MCF 10A (cell line): ENCODE measurements at regions of chr12 and their contacts with region 1.

Region 1: DNA sequence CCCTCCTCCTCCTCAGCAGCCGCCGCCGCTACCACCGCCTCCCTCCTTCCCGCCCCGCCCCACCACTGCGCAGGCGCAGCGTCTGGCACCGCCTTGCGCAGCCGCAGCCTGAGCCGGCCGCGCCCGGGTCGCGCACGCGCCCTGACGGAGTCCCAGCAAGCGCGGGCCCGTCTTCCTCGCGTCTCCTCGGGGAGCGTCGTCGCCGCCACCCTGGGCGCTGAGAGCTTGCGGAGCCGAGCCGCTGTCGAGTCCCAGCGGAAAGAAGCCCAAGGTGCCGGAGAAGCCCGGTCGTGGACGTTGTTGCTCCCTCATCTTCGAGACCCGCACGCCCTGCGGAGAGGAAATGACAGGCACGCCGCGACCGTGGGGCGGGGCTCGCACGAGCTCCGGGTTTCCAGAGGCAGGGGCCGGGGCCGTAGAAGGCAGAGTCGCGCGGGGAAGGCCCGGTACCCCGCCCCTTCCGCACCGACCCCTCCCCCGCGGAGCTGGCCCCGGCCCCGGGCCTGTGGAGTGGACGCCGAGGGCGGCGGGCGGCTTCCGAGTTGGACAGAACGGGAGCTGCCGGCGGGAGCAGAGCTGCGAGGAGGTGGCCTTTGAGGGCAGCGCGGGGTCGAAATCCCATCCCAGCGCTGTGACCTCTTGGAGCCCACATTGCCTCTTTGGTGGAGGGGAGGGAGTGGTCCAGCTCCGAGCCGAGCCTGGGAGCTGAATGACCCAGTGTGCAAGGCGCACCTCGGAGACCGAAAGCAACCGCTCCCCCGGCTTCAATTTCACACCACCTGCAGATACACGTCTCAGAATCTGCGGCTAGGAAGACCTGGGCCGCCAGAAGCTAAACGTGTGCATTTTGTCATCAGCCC is 469 bp upstream of the RAB35 start:
- DNase-seq: peak; percentile 92
- H3K4me3 Mint-ChIP-seq: peak overlapping the region; percentile 83
- H3K27ac Mint-ChIP-seq: peak overlapping the region; percentile 95
- H3K4me1 Mint-ChIP-seq: peaks cover 44% of the 10 kb centered on the region
- H3K27me3 Mint-ChIP-seq: no peaks in the 10 kb centered on the region
- CTCF ChIP-seq: no peak

Region 2: GRCh38 chr12:119949145-119949544 is 167.9 kb before region 1 on chr12:
- CTCF ChIA-PET with region 1: no interaction called
- POLR2A ChIA-PET with region 1: no interaction called
- intact Hi-C with region 1: no loop called
- DNase-seq: no peak
- H3K4me3 Mint-ChIP-seq: no peak overlapping the region
- H3K27ac Mint-ChIP-seq: no peak overlapping the region
- H3K4me1 Mint-ChIP-seq: no peaks in the 10 kb centered on the region
- H3K27me3 Mint-ChIP-seq: no peaks in the 10 kb centered on the region
- CTCF ChIP-seq: no peak

Region 3: DNA sequence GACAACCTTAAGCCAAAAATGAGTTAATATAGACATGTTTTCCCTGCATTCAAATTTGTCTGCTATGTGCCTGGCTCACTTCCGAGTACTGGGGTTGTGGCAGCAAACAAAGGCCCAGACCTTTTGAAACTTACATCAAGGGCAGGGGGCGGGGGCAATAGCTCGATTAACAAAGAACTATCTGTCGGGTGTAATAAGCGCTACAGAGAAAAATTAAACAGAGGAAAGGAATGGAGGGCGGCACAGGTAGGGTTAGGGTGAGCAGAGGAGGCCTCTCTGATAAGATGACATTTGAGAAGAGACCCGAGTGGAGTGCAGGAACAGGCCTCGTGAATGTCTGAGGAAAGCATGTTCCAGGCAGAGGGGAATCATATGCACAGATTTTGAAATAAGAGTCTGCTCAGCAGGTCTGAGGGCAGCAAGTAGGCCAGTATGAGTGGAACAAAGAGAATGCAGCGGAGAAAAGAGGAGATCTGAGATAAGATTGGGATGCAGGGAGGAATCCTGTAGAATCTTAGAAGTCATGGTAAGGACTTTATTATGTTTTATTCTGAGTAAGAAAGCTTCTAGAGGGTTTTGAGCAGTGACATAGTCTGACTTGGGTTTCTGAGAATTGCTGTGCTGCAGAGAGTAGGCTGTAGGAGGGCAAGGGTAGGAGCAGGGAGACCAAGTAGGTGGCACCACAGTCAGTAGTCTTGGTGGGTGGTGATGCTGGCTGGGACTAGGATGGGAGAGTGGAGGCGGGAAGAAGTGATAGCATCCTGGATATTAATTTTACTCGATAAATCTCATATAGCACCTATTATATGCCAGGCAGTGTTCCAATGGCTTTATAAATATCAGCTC is 75.4 kb before region 1 on chr12:
- CTCF ChIA-PET with region 1: no interaction called
- POLR2A ChIA-PET with region 1: interaction called, 10 read pairs
- intact Hi-C with region 1: no loop called
- DNase-seq: peak; percentile 35
- H3K4me3 Mint-ChIP-seq: no peak overlapping the region
- H3K27ac Mint-ChIP-seq: peak overlapping the region; percentile 82
- H3K4me1 Mint-ChIP-seq: peaks cover 21% of the 10 kb centered on the region
- H3K27me3 Mint-ChIP-seq: no peaks in the 10 kb centered on the region
- CTCF ChIP-seq: no peak

Region 4: GRCh38 chr12:120086801-120087621 is 30.0 kb before region 1 on chr12:
- CTCF ChIA-PET with region 1: interaction called, 6 read pairs
- POLR2A ChIA-PET with region 1: interaction called, 46 read pairs
- intact Hi-C with region 1: no loop called
- DNase-seq: peak; percentile 98
- H3K4me3 Mint-ChIP-seq: peak overlapping the region; percentile 70
- H3K27ac Mint-ChIP-seq: peak overlapping the region; percentile 79
- H3K4me1 Mint-ChIP-seq: peaks cover 23% of the 10 kb centered on the region
- H3K27me3 Mint-ChIP-seq: no peaks in the 10 kb centered on the region
- CTCF ChIP-seq: peak; percentile 95

Region 5: DNA sequence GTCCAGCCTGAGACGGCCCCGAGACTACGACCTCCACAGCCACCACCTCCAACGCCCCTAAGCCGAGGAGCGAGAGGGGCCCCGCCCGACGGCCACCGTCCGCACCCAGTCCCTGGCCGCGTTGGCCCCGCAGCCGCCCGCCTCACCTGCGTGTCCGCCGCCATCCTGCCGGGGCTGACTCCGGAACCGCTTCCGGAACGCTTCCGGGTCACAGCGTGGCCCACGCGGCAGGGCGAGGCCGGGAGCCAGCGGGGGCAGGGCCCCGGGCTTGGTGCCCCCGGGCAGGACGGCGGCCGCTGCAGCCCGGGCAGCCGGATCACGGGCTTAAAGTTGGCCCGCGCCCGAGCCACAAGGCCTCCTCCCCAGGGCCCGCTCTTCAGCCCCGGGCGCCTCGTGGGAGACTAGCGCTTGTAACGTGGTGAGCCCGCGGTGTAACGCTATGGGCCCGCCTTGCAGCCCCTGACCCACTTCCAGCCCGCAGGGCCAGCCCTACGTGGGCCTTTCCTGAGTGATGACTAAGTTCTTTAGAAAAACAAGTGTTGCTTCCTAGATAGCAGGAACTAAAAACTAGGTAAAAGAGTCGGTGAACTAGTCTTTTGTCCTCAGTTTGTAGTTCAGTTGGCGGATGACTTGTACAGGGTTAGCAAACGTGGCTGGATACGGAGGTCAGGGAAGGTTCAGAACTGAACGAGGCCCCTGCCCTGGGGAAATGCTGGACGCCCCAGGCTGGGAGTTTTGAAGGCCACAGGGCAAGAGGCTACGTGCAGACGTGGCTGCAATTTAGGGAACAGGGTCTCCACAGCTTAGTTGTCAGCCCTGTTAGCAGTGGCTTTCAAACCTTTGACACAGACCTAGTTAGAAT is 77.7 kb after region 1 on chr12 and contains the start of gene GCN1:
- CTCF ChIA-PET with region 1: no interaction called
- POLR2A ChIA-PET with region 1: interaction called, 106 read pairs
- intact Hi-C with region 1: loop called (anchors 5 kb)
- DNase-seq: peak; percentile 82
- H3K4me3 Mint-ChIP-seq: peak within 1 kb of the TSS; percentile 80
- H3K27ac Mint-ChIP-seq: peak within 1 kb of the TSS; percentile 89
- H3K4me1 Mint-ChIP-seq: peaks cover 23% of the 10 kb centered on the region
- H3K27me3 Mint-ChIP-seq: no peaks in the 10 kb centered on the region
- CTCF ChIP-seq: no peak
- total RNA-seq, gene GCN1: 116 and 117 TPM in 2 replicates